ENCODE measurements at regions of chr13 and their contacts with region 1.

Region 1: DNA sequence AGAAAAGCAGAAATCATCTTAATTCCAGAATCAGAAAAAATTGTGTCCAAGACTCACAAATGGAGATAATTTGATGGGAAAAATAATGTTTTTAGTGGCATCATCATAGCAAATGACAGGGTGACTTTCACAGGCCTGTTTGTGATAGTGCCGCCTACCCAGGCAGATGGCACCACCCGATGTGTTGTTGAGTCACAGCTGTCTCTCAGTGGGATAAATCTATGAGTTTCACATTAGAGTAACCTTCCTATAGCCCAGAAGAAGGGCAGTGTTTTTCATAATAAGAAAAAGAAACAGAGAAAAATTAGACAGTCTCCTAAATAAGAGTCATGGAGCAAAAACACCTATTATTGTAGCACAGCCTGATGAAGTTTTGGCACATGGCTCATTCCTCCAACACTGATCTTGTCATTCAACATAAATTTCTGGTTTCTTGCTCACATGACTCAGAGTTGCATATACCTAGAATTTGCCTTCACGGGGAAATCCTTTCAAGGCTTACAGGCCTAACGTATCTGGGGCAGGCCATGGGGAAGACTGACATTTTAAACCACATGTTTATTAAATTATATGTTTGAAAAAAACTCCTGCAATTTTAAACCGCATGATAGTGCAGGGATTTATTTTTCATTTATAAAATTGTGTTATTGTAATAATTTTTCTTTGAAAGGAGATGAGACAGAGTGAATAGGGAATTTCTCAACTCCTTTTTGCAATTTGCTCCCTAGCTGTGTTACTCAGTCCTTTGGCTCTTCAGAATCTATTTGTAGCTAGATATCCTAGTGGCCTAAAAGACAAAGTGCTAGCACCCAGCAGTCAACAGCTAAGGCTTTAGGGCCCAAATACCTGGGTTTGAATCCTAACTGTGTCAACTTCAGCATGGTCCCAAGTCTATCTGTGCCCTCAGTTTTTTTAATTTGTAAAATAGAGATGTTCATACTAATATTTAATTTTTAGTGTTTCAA is 393.7 kb downstream of the NDFIP2 start:
- DNase-seq: no peak
- ATAC-seq: no peak
- H3K4me3 ChIP-seq: no peak overlapping the region
- H3K27ac ChIP-seq: no peak overlapping the region
- H3K4me1 ChIP-seq: no peaks in the 10 kb centered on the region
- H3K27me3 ChIP-seq: no peaks in the 10 kb centered on the region
- CTCF ChIP-seq: no peak
- POLR2A ChIP-seq: no peak

Region 2: GRCh38 chr13:78194904-78195639 is 1679.6 kb before region 1 on chr13:
- in situ Hi-C with region 1: no loop called
- intact Hi-C with region 1: no loop called
- DNase-seq: no peak
- ATAC-seq: no peak
- H3K4me3 ChIP-seq: no peak overlapping the region
- H3K27ac ChIP-seq: no peak overlapping the region
- H3K4me1 ChIP-seq: no peaks in the 10 kb centered on the region
- H3K27me3 ChIP-seq: no peaks in the 10 kb centered on the region
- CTCF ChIP-seq: no peak
- POLR2A ChIP-seq: no peak

Region 3: DNA sequence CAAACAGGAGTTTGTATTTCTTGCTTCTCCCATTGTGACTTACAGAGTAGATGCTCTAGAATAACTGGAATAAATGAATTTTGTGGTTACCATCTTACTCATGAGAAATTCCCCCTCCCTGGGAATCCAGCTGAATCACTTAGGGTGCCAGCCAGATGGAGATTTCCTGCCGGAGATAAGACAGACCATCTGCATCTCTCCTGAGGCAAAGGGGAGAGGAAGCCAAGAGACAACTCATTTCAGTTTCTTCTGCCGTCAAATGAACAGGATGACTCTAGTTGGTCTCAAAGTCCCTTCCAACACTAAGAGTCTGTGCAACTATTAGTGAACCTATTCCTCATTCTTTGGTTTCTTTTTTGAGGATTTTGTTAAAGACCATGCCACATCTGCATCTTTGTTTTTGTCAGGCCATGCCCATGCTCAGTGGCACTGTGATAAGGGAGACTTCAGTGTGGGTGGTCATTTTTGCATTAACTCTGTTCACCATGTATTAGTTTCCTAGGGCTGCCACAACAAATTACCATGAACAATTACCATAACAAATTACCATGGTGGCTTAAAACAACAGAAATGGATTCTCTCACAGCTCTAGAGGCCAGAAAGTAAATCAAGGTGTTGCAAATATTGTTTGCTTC is 280.9 kb before region 1 on chr13:
- in situ Hi-C with region 1: no loop called
- intact Hi-C with region 1: no loop called
- DNase-seq: no peak
- ATAC-seq: no peak
- H3K4me3 ChIP-seq: no peak overlapping the region
- H3K27ac ChIP-seq: no peak overlapping the region
- H3K4me1 ChIP-seq: no peaks in the 10 kb centered on the region
- H3K27me3 ChIP-seq: no peaks in the 10 kb centered on the region
- CTCF ChIP-seq: no peak
- POLR2A ChIP-seq: no peak

Region 4: GRCh38 chr13:79679334-79679733 is 195.3 kb before region 1 on chr13:
- in situ Hi-C with region 1: no loop called
- intact Hi-C with region 1: no loop called
- DNase-seq: peak; percentile 46 to 68
- ATAC-seq: peak; percentile 72 to 91
- H3K4me3 ChIP-seq: no peak overlapping the region
- H3K27ac ChIP-seq: no peak overlapping the region
- H3K4me1 ChIP-seq: peaks cover 0 to 8% of the 10 kb centered on the region in 2 donors
- H3K27me3 ChIP-seq: no peaks in the 10 kb centered on the region
- CTCF ChIP-seq: peak; percentile 73 to 84 (median 76)
- POLR2A ChIP-seq: no peak

Region 5: DNA sequence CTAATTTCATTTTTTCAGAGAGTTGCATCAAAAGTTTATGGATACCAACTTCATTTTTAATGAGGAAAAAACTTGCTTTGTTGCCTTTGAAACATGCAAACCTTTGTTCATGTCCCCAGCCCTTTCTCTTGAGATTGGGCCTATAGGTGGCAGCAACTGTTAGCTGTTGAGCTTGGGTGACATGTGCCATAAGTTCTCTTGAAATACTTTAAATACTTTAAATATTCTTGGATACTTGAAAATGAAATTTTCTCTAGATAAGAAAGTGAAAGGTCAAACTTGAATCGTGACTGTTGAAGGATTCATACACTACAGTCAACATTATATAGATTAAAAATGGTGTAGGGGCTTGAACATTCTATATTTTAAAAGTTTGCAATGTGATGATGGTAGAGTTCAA is 98.8 kb before region 1 on chr13:
- in situ Hi-C with region 1: no loop called
- intact Hi-C with region 1: no loop called
- DNase-seq: no peak
- ATAC-seq: no peak
- H3K4me3 ChIP-seq: no peak overlapping the region
- H3K27ac ChIP-seq: no peak overlapping the region
- H3K4me1 ChIP-seq: peaks cover 0 to 4% of the 10 kb centered on the region in 2 donors
- H3K27me3 ChIP-seq: no peaks in the 10 kb centered on the region
- CTCF ChIP-seq: peak in 4 of 5 experiments; percentile 8 to 52 (median 40)
- POLR2A ChIP-seq: no peak

Region 6: GRCh38 chr13:79904581-79904980 is 29.9 kb after region 1 on chr13:
- in situ Hi-C with region 1: no loop called
- intact Hi-C with region 1: loop called (anchors 2 kb)
- DNase-seq: no peak
- ATAC-seq: no peak
- H3K4me3 ChIP-seq: no peak overlapping the region
- H3K27ac ChIP-seq: no peak overlapping the region
- H3K4me1 ChIP-seq: no peaks in the 10 kb centered on the region
- H3K27me3 ChIP-seq: no peaks in the 10 kb centered on the region
- CTCF ChIP-seq: no peak
- POLR2A ChIP-seq: no peak